Activated B cell treated with CpG ODN at 0.5 μM for 24 hours (primary cell): ENCODE measurements at regions of chr20 and their contacts with region 1.

Region 1: DNA sequence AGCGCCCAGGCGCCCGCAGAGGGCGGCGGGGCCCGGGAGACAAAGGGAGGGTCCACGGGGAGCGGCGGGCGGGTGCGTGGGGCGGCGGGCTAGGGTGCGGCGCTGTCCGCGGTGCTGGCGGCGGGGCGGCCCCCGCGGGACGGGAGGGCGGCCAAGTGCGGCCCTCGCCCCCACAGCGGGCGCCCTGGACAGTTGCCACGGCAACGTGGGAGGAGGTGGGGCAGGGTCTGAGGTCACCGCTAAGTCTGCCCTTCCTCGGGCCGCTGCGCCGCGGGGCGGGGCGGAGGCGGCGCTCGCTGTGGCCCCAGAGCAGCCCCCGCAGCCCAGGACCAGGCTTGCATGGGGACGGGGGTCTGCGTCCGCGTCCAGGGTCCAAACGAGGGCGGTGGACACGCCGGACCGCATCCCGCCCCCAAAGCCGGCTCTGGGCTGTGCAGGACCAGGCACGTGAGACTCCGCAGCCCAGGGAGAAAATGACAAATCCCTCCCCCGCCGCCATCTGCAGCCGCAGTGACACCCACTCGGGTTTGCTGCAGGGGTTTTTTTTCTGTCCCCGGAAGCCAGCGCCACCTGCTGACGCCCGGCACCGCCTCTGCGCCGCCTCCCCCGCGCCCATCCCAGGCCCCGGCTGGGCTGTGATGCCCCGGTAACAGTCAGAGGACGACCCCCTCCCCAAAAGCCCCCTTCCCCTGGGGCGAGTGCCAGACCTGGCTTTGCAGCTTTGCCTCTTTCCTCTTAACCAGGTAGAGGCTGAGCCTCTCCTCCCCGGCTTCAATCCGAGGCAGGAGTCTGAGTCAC is 36.8 kb downstream of the YTHDF1 start:
- DNase-seq: peak; percentile 70
- ATAC-seq: peak; percentile 80
- H3K4me3 Mint-ChIP-seq: peak overlapping the region; percentile 66
- H3K27ac Mint-ChIP-seq: no peak overlapping the region
- H3K4me1 Mint-ChIP-seq: peaks cover 21% of the 10 kb centered on the region
- H3K27me3 Mint-ChIP-seq: peaks cover 31% of the 10 kb centered on the region
- CTCF ChIP-seq: no peak

Region 2: DNA sequence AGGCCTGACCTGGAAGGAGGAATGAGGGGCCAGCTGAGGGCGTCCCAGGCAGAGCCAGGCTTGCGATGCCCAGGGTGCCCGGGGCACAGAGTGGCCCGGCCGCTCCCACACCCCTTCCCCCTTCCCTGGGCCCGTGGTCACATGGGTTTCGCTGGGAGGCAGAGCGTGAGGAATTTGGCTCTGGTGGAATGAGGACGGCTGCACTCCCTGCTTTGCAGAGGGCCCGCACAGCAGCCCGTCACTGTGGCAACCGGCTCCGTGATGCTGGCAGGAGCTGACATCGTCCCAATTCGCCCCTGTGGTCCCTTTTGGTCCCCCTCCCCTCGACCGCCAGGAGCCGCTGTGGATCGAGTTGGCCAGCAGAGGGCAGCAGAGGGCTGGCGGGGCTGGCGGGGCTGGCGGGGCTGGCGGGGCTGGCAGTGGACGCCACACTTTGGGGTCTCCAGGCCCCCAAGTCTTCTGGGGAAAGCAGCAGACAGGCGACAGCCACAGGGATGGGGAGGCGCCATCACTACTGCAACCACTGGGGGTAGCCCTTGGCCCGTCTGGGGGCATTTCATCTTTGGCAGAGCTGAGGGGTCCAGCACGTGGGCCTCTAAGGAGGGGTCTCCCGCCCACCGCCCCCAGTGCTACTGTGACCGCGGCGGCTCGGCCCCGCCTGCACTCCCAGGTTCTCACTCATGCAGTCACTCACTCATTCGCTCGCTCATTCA is 122.7 kb before region 1 on chr20:
- CTCF ChIA-PET with region 1: no interaction called
- POLR2A ChIA-PET with region 1: no interaction called
- intact Hi-C with region 1: loop called (anchors 1 kb)
- DNase-seq: peak; percentile 47
- ATAC-seq: peak; percentile 57
- H3K4me3 Mint-ChIP-seq: no peak overlapping the region
- H3K27ac Mint-ChIP-seq: no peak overlapping the region
- H3K4me1 Mint-ChIP-seq: no peaks in the 10 kb centered on the region
- H3K27me3 Mint-ChIP-seq: peaks cover 13% of the 10 kb centered on the region
- CTCF ChIP-seq: peak; percentile 52

Region 3: DNA sequence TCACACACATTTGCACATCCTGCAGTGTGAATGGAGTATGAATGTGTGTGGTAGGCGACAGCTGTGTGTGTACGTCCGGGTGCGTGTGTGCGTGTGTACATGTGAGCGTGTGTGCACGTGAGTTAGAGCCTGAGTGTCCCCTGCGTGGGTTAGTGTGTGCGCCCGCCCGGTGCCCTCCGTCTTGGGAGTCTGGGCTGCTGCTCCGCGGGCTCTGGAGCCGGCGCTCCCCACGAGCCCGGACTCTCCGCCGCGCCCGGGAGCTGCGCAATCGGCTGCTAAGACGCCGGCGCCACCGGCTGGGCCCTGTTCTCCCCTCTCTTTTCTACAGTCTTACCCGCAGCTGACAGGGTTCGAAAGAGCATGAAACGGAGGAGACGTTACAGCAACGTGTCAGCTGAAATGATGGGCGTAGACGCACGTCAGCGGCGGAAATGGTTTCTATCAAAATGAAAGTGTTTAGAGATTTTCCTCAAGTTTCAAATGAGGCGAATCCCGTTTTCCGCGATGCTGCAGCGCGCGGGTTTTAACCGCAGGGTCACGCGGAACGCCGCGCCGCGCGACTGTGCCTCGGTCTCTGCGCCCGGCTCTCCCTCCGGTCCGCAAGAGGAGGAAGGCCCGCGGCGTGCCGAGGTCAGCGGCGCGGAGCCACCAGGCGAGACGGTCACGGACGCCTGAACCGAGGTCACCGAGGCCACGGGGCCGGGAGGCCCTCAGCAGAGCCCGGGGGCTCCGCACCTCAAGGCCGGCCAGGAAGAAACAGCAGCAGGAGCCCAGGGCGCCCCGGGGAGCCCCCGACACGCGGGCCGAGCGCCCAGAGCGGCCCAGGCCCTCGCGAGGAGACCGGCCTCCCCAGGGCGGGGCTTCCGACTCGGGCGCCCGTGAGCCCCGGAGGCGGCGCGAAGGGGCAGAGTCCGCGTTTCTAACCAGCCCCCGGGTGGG is 77.0 kb before region 1 on chr20:
- CTCF ChIA-PET with region 1: no interaction called
- POLR2A ChIA-PET with region 1: no interaction called
- intact Hi-C with region 1: loop called (anchors 5 kb)
- DNase-seq: peak; percentile 47
- ATAC-seq: peak; percentile 74
- H3K4me3 Mint-ChIP-seq: peak overlapping the region; percentile 85
- H3K27ac Mint-ChIP-seq: peak overlapping the region; percentile 51
- H3K4me1 Mint-ChIP-seq: peaks cover 6% of the 10 kb centered on the region
- H3K27me3 Mint-ChIP-seq: peaks cover 4% of the 10 kb centered on the region
- CTCF ChIP-seq: no peak

Region 4: DNA sequence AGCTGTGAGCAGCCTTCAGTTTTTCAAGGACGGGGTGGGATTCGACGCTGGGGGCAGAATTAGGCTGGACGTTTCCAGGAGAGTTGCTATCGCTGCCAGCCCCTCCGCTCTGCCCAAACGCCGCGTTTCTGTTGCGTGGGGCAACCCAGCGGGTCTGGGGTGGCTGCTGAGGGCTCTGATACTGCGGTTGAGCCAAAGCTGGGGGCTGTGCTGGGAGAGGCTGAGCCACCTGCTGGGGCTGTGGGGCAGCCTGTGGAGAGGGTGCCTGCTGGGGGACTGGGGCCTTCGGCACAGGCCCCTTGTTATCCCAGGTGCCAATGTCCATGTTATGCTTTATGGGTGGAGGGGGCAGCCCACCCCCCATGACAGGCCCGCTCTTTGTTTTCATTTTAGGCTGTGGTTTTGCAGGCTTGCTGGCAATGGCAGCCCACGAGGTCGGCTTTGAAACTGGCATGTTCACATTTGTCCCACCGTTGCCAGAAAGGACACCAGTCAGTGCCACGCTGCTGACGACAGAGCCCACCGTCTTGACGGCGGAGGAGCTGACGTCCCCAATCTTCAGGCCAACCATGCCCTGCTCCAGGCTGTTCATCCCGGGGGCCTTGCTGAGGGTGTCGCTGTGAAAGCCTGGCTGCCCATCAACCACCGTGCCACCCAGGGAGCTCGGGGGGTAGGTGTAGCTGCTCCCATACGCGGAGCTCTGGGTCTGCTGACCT is 23.9 kb after region 1 on chr20:
- CTCF ChIA-PET with region 1: no interaction called
- POLR2A ChIA-PET with region 1: no interaction called
- intact Hi-C with region 1: no loop called
- DNase-seq: no peak
- ATAC-seq: no peak
- H3K4me3 Mint-ChIP-seq: no peak overlapping the region
- H3K27ac Mint-ChIP-seq: no peak overlapping the region
- H3K4me1 Mint-ChIP-seq: peaks cover 2% of the 10 kb centered on the region
- H3K27me3 Mint-ChIP-seq: no peaks in the 10 kb centered on the region
- CTCF ChIP-seq: no peak

Region 5: DNA sequence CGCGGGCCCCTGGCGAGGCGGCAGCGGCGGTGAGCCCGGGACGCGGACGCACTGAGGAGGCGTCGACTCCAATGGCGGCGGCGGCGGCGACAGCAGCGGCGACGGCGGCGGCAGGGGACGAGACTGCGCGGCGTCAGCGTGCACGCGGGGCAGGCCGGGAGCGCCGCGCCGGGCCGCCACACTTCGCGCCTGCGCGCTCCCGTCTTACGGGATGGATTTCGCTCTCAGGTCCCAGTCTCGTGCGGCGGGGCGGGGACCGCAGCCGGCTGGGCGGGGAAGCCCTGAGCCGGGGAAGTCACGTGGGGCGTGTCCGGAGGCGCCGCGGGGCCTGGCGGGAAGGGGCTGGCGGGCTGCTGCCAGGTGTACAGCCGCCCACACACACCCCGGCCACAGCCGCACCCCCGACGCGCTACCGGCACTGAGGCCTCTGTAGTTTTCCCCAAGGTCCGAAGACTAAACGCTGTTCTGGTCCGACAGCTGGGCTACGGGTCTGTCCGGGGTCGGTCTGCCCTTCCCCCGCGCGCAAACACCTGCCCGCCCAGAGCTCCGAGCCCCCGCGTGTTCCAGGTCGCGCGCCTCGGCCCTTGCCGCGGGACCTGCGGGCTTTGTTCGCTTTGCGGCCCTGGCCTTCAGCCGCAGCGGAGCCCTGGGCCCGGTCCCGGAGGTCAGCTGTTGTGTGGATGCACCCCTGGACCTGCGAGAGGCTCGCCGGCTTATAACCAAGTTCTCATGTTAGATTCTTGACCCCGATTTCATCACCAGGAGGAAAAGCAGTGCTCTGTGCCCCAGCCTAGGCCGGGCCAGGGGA is 37.2 kb after region 1 on chr20 and contains the start of gene YTHDF1:
- CTCF ChIA-PET with region 1: no interaction called
- POLR2A ChIA-PET with region 1: no interaction called
- intact Hi-C with region 1: loop called (anchors 1 kb)
- DNase-seq: peak; percentile 96
- ATAC-seq: peak; percentile 87
- H3K4me3 Mint-ChIP-seq: peak within 1 kb of the TSS; percentile 89
- H3K27ac Mint-ChIP-seq: peak within 1 kb of the TSS; percentile 84
- H3K4me1 Mint-ChIP-seq: peaks cover 40% of the 10 kb centered on the region
- H3K27me3 Mint-ChIP-seq: peaks cover 4% of the 10 kb centered on the region
- CTCF ChIP-seq: no peak
- total RNA-seq, gene YTHDF1: 32.6 and 34.1 TPM in 2 replicates

Region 6: GRCh38 chr20:63253438-63254236 is 74.5 kb after region 1 on chr20:
- CTCF ChIA-PET with region 1: no interaction called
- POLR2A ChIA-PET with region 1: no interaction called
- intact Hi-C with region 1: loop called (anchors 5 kb)
- DNase-seq: no peak
- ATAC-seq: no peak
- H3K4me3 Mint-ChIP-seq: peak overlapping the region; percentile 64
- H3K27ac Mint-ChIP-seq: no peak overlapping the region
- H3K4me1 Mint-ChIP-seq: peaks cover 14% of the 10 kb centered on the region
- H3K27me3 Mint-ChIP-seq: peaks cover 41% of the 10 kb centered on the region
- CTCF ChIP-seq: no peak

Region 7: DNA sequence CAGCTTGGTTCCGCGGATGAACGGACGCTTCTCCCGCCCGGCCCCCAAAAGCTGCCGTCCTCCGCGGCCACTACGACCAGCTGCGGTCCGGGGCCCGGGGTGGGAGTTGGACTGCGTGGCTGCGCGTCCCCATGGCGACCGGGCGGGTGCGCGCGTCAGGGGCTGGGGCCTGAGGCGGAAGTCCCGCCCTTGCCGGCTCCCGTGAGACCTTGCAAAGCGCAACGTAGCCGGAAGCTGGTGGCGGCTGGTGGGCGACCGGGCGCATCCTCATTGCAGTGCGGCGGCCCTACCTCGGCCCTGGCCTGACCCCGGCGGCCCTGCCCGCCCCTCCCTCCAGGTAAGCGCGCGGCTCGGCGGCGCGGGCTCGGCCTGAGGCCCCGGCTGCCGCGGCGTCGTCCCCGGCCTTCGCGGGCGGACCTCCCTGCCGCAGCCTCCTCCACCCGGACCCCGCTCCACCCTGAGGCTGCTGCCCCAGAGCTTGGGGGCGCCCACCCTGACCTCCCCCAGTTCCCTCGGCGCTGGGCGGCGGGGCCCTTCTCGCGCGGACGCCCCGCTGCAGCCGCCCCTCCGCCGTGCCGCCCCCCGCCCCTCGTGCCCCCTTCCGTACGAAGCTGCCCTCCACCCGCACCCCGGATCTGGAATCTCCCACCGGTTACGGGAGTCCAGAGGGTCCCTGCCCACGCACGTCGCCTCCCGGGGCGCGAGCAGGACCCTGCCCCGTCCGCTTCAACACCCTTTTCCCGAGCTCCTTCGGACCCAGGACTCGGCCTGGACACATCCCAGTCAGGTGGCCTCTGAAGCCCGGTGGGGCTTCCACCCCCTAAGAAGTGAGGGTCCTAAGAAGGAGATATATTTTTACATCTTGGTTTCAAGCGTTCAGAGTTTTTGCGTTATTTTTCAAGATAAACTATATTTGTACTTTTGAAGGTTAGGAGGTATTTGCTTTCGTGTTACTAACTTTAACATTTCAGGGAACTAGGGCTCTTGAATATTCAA is 93.8 kb after region 1 on chr20 and contains the start of gene ARFGAP1:
- CTCF ChIA-PET with region 1: no interaction called
- POLR2A ChIA-PET with region 1: no interaction called
- intact Hi-C with region 1: loop called (anchors 5 kb)
- DNase-seq: peak; percentile 94
- ATAC-seq: peak; percentile 94
- H3K4me3 Mint-ChIP-seq: peak within 1 kb of the TSS; percentile 86
- H3K27ac Mint-ChIP-seq: peak within 1 kb of the TSS; percentile 66
- H3K4me1 Mint-ChIP-seq: peaks cover 21% of the 10 kb centered on the region
- H3K27me3 Mint-ChIP-seq: no peaks in the 10 kb centered on the region
- CTCF ChIP-seq: no peak
- total RNA-seq, gene ARFGAP1: 72.4 and 85.8 TPM in 2 replicates